Panc1 (cell line): ENCODE measurements at regions of chr5 and their contacts with region 1.

Region 1: GRCh38 chr5:75053304-75054133 is 1.2 kb upstream of the GCNT4 start:
- DNase-seq: no peak
- ATAC-seq: peak; percentile 73
- H3K4me3 ChIP-seq: peak overlapping the region; percentile 53 to 61
- H3K27ac ChIP-seq: peak overlapping the region; percentile 51
- H3K4me1 ChIP-seq: peaks cover 8% of the 10 kb centered on the region
- H3K27me3 ChIP-seq: no peaks in the 10 kb centered on the region; the same call in 1 of the 2 replicates
- CTCF ChIP-seq: peak; percentile 75

Region 2: DNA sequence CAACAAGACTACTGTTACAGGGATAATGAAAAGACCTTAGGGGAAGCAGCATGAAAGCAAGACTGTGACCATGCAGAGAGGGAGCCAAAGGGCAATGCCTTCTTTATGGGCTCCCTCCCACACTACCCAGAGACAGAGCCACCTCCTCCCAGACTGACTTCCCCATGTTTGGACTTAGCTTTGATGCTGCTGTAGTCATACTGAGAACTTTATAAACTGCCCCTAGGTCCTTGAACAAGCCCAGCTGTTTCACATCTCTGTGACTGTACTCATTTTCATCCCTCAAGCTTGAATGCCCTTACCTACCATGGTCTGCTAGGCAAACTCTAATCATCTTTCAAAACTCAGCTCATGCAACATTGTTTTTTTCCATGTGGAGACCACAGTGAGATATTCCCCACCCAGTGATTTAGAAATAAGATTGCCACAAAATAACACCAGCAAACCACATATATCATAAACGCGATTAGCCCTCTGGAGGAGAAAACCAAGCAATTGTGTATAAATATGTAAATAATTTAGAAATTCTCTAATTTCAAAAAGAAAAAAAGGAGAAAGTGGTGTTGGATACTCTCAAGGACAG is 163.9 kb before region 1 on chr5:
- CTCF ChIA-PET with region 1: no interaction called
- POLR2A ChIA-PET with region 1: no interaction called
- in situ Hi-C with region 1: no loop called
- intact Hi-C with region 1: no loop called
- DNase-seq: no peak
- ATAC-seq: peak; percentile 21; the same call in 1 of the 2 replicates
- H3K4me3 ChIP-seq: no peak overlapping the region
- H3K27ac ChIP-seq: no peak overlapping the region
- H3K4me1 ChIP-seq: 0 out of 2 replicates have a peak, but pooled peaks cover 3% of the 10 kb centered on the region
- H3K27me3 ChIP-seq: no peaks in the 10 kb centered on the region
- CTCF ChIP-seq: no peak

Region 3: DNA sequence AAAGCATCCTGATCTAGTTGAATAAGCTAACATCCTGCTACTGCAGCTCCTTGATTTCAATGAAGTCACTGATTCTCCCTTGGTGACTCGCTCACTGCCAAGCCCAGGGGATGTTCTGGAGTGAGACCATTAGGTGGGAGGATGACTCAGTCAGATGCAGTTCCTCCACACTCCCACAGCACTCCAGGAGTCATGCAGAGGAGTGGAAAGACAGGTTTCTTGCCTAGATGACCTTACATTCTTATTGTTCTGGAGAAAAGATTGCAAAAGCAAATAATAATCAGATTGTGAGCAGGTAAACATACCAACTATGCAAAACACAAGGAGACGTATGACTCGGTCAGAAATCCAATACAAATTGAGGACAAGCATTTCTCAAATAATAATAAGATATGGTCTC is 16.4 kb before region 1 on chr5:
- CTCF ChIA-PET with region 1: no interaction called
- POLR2A ChIA-PET with region 1: no interaction called
- in situ Hi-C with region 1: no loop called
- intact Hi-C with region 1: no loop called
- DNase-seq: no peak
- ATAC-seq: peak; percentile 73
- H3K4me3 ChIP-seq: no peak overlapping the region
- H3K27ac ChIP-seq: no peak overlapping the region
- H3K4me1 ChIP-seq: no peaks in the 10 kb centered on the region
- H3K27me3 ChIP-seq: peaks cover 6% of the 10 kb centered on the region; the same call in 1 of the 2 replicates
- CTCF ChIP-seq: no peak

Region 4: DNA sequence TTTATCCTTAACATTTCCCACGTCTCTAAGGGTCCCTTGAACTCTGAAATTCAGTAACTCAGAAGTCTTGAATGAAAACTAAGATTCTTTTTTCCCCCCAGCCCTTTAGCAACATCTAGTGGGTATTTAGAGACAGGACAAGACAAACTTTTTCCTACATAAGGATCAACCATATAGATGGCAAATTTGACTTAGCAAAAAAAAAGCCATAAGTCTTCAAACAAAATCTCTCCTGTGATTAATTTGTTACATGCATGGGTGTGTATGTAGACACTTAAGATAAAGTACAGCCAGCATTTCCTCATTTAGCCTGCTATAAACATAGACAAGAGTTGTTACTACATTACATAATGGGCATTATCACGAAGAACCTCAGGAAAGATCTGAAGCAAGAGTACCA is 212.2 kb after region 1 on chr5:
- CTCF ChIA-PET with region 1: no interaction called
- POLR2A ChIA-PET with region 1: no interaction called
- in situ Hi-C with region 1: no loop called
- intact Hi-C with region 1: loop called (anchors 2 kb)
- DNase-seq: peak; percentile 25
- ATAC-seq: no peak; the same call in none of the 2 replicates
- H3K4me3 ChIP-seq: no peak overlapping the region
- H3K27ac ChIP-seq: no peak overlapping the region
- H3K4me1 ChIP-seq: no peaks in the 10 kb centered on the region
- H3K27me3 ChIP-seq: peaks cover 3% of the 10 kb centered on the region; the same call in 1 of the 2 replicates
- CTCF ChIP-seq: peak; percentile 77; the same call in 1 of the 2 replicates

Region 5: DNA sequence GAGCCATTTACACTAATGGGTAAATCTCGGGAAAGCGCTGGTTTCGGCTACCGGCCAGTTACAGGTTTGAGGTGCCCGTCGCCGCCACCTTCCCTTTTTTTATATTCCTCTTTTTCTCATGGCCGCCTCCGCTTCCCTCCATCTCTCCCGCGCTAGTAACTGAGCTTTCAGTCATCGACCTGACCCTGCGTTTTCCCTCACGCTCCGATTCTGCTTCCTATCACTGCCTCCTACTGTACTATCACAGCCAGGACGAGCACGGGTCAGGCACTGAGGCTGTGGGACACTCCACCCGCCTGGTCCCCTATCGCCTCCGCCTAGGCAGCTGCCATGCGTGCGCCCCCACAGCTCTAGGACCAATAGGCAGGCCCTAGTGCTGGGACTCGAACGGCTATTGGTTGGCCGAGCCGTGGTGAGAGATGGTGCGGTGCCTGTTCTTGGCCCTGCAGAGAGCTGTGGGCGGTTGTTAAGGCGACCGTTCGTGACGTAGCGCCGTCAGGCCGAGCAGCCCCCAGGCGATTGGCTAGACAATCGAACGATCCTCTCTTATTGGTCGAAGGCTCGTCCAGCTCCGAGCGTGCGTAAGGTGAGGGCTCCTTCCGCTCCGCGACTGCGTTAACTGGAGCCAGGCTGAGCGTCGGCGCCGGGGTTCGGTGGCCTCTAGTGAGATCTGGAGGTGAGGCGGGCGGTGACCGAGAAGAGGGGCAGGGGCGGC is 283.3 kb after region 1 on chr5 and contains the start of gene HMGCR:
- CTCF ChIA-PET with region 1: no interaction called
- POLR2A ChIA-PET with region 1: interaction called, 6 read pairs
- in situ Hi-C with region 1: no loop called
- intact Hi-C with region 1: loop called (anchors 5 kb)
- DNase-seq: peak; percentile 97
- ATAC-seq: peak; percentile 99
- H3K4me3 ChIP-seq: peak within 1 kb of the TSS; percentile 70 to 97
- H3K27ac ChIP-seq: peak within 1 kb of the TSS; percentile 85
- H3K4me1 ChIP-seq: peaks cover 26% of the 10 kb centered on the region
- H3K27me3 ChIP-seq: no peaks in the 10 kb centered on the region
- CTCF ChIP-seq: peak; percentile 51
- total RNA-seq, gene HMGCR: 113 TPM

Region 6: GRCh38 chr5:75611311-75612225 is 558.0 kb after region 1 on chr5 and contains the start of gene ANKDD1B:
- CTCF ChIA-PET with region 1: interaction called, 11 read pairs
- POLR2A ChIA-PET with region 1: no interaction called
- in situ Hi-C with region 1: no loop called
- intact Hi-C with region 1: no loop called
- DNase-seq: no peak
- ATAC-seq: peak; percentile 80
- H3K4me3 ChIP-seq: peak within 1 kb of the TSS; percentile 56 to 70
- H3K27ac ChIP-seq: peak within 1 kb of the TSS; percentile 68
- H3K4me1 ChIP-seq: peaks cover 4% of the 10 kb centered on the region
- H3K27me3 ChIP-seq: no peaks in the 10 kb centered on the region
- CTCF ChIP-seq: no peak
- total RNA-seq, gene ANKDD1B: 0.10 TPM

Region 7: DNA sequence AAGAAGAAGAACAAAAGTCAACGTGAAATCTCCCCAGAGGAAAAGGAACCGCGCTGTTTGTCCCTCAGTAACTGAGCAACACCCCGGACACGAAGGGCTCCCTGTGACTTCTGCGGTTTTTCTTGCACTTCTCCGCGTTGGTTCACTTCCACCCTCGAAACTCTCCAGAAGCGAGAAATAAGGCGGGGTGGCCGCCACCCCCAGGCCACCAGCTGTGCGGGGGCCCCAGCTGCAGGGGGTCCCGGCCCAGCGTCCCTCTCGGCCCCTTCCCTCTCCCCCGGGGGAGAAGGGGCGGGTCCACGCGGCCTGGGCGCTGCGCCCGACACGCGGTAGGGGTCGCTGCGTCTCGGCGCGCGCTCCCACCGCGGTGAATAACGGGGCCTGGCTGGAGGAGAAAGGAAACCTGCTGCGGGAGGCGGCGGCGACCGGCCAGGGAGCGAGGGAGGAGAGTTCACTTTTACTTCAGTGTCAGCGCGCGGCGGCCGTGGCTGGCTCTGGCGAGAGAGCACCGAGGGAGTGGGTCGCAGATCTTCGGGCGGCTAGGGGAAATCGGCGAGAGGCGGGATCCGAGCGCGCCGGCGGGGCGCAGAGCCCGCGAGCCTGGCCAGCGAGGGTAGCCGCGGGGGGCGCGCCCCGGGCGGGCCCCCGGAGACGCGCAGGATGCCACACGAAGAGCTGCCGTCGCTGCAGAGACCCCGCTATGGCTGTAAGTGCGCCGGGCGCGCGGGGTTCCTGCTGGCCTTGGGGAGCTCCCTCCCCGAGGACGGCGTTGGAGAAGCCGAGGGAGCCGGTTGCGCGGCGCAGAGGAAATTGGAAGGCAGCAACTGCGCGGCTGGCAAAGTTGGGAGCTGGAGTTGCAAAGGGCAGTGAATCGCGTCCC is 1349.6 kb after region 1 on chr5 and contains the start of gene IQGAP2:
- CTCF ChIA-PET with region 1: no interaction called
- POLR2A ChIA-PET with region 1: no interaction called
- in situ Hi-C with region 1: no loop called
- intact Hi-C with region 1: no loop called
- DNase-seq: no peak
- ATAC-seq: peak; percentile 88
- H3K4me3 ChIP-seq: peak within 1 kb of the TSS; percentile 50 to 59
- H3K27ac ChIP-seq: no peak within 1 kb of the TSS
- H3K4me1 ChIP-seq: no peaks in the 10 kb centered on the region
- H3K27me3 ChIP-seq: peaks cover 57% of the 10 kb centered on the region
- CTCF ChIP-seq: peak; percentile 84
- total RNA-seq, gene IQGAP2: 0.59 TPM